ENCODE measurements at regions of chr2 and their contacts with region 1.

Region 1: GRCh38 chr2:11743846-11744553 is 2.4 kb upstream of the LPIN1 start:
- DNase-seq: peak; percentile 15 to 85 (median 69)
- H3K4me3 ChIP-seq: peak overlapping the region; percentile 16
- H3K4me3 Mint-ChIP-seq: peak overlapping the region; percentile 59 to 95 (median 76)
- H3K27ac ChIP-seq: peak overlapping the region; percentile 64
- H3K27ac Mint-ChIP-seq: peak overlapping the region; percentile 54 to 95 (median 89)
- H3K4me1 ChIP-seq: peaks cover 47% of the 10 kb centered on the region
- H3K4me1 Mint-ChIP-seq: peaks cover 44 to 53% (median 48%) of the 10 kb centered on the region in 3 donors
- H3K27me3 ChIP-seq: no peaks in the 10 kb centered on the region
- H3K27me3 Mint-ChIP-seq: no peaks in the 10 kb centered on the region

Region 2: DNA sequence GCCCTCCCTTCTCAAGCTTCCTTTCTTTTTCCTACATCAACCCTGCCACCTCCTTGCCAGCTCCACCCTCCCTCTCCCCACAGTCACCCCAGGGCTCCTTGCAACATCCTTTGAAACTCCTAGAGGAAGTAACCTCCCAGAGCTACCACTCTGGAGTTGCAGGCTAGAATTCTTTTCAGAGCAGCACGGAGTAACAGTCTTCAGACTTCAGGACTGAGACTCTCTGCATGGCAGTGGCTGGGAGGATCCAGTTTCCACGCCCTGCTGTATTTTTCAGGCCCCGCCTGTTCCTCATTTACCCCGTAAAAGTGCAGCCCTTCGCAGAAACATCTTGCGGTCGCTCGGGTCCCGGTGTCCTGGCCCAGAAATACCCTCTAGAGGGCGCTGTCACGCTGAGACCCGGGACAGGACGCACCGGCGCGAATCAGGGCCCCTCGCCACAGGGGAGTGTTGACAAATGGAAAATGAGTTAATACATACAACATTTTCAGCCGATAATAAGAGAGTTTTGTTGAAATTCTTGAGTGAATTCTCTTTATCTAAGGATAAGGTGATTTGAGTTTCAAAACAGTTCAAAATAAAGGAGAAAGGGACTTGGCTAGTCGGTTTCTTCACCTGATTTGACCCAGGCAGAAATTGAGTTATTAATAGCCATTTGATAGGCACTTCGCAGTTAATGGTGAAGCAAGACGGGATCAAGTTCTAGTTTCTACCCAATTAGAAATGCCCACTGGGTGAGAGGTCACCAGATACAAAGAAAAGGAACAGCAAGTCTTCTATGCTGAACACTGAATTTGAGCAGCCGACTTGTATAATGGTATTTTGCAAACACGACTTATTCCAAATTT is 55.6 kb before region 1 on chr2:
- CTCF ChIA-PET with region 1: interaction called, 23 read pairs
- POLR2A ChIA-PET with region 1: no interaction called
- DNase-seq: peak; percentile 68 to 79 (median 71)
- H3K4me3 ChIP-seq: no peak overlapping the region
- H3K4me3 Mint-ChIP-seq: peak overlapping the region in 6 of 7 donors; percentile 19 to 64 (median 46)
- H3K27ac ChIP-seq: no peak overlapping the region
- H3K27ac Mint-ChIP-seq: no peak overlapping the region
- H3K4me1 ChIP-seq: peaks cover 7% of the 10 kb centered on the region
- H3K4me1 Mint-ChIP-seq: peaks cover 11 to 15% (median 14%) of the 10 kb centered on the region in 3 donors
- H3K27me3 ChIP-seq: no peaks in the 10 kb centered on the region
- H3K27me3 Mint-ChIP-seq: peaks cover 7 to 25% of the 10 kb centered on the region in 2 donors

Region 3: GRCh38 chr2:11753886-11754699 is 10.1 kb after region 1 on chr2:
- CTCF ChIA-PET with region 1: interaction called, 17 read pairs
- POLR2A ChIA-PET with region 1: interaction called, 12 read pairs
- DNase-seq: peak; percentile 47 to 80 (median 49)
- H3K4me3 ChIP-seq: peak overlapping the region; percentile 49
- H3K4me3 Mint-ChIP-seq: peak overlapping the region; percentile 79 to 95 (median 84)
- H3K27ac ChIP-seq: peak overlapping the region; percentile 71
- H3K27ac Mint-ChIP-seq: peak overlapping the region; percentile 93 to 99 (median 95)
- H3K4me1 ChIP-seq: peaks cover 92% of the 10 kb centered on the region
- H3K4me1 Mint-ChIP-seq: peaks cover 83 to 95% (median 93%) of the 10 kb centered on the region in 3 donors
- H3K27me3 ChIP-seq: no peaks in the 10 kb centered on the region
- H3K27me3 Mint-ChIP-seq: peaks cover 0 to under 1% of the 10 kb centered on the region in 2 donors

Measured in CD8-positive, alpha-beta memory T cell (primary cell).